ENCODE measurements at regions of chr6 and their contacts with region 1.

Region 1: GRCh38 chr6:40341726-40342125 is 245.4 kb downstream of the LRFN2 start:
- DNase-seq: peak in 1 of 9 experiments; percentile 31
- ATAC-seq: no peak
- H3K4me3 ChIP-seq: no peak overlapping the region
- H3K4me3 Mint-ChIP-seq: no peak overlapping the region
- H3K27ac ChIP-seq: no peak overlapping the region
- H3K27ac Mint-ChIP-seq: no peak overlapping the region
- H3K4me1 ChIP-seq: no peaks in the 10 kb centered on the region
- H3K4me1 Mint-ChIP-seq: no peaks in the 10 kb centered on the region
- H3K27me3 ChIP-seq: no peaks in the 10 kb centered on the region
- H3K27me3 Mint-ChIP-seq: peaks cover 7% of the 10 kb centered on the region
- CTCF ChIP-seq: no peak

Region 2: GRCh38 chr6:40285996-40286395 is 55.7 kb before region 1 on chr6:
- CTCF ChIA-PET with region 1: no interaction called
- POLR2A ChIA-PET with region 1: no interaction called
- intact Hi-C with region 1: no loop called
- DNase-seq: no peak
- ATAC-seq: no peak
- H3K4me3 ChIP-seq: no peak overlapping the region
- H3K4me3 Mint-ChIP-seq: no peak overlapping the region
- H3K27ac ChIP-seq: no peak overlapping the region
- H3K27ac Mint-ChIP-seq: no peak overlapping the region
- H3K4me1 ChIP-seq: no peaks in the 10 kb centered on the region
- H3K4me1 Mint-ChIP-seq: no peaks in the 10 kb centered on the region
- H3K27me3 ChIP-seq: no peaks in the 10 kb centered on the region
- H3K27me3 Mint-ChIP-seq: peaks cover 29% of the 10 kb centered on the region
- CTCF ChIP-seq: no peak

Region 3: GRCh38 chr6:40299681-40300080 is 42.0 kb before region 1 on chr6:
- CTCF ChIA-PET with region 1: no interaction called
- POLR2A ChIA-PET with region 1: no interaction called
- intact Hi-C with region 1: no loop called
- DNase-seq: no peak
- ATAC-seq: no peak
- H3K4me3 ChIP-seq: no peak overlapping the region
- H3K4me3 Mint-ChIP-seq: no peak overlapping the region
- H3K27ac ChIP-seq: no peak overlapping the region
- H3K27ac Mint-ChIP-seq: no peak overlapping the region
- H3K4me1 ChIP-seq: no peaks in the 10 kb centered on the region
- H3K4me1 Mint-ChIP-seq: no peaks in the 10 kb centered on the region
- H3K27me3 ChIP-seq: no peaks in the 10 kb centered on the region
- H3K27me3 Mint-ChIP-seq: peaks cover 18% of the 10 kb centered on the region
- CTCF ChIP-seq: no peak

Region 4: GRCh38 chr6:40356242-40356910 is 14.7 kb after region 1 on chr6:
- CTCF ChIA-PET with region 1: no interaction called
- POLR2A ChIA-PET with region 1: no interaction called
- intact Hi-C with region 1: no loop called
- DNase-seq: no peak
- ATAC-seq: no peak
- H3K4me3 ChIP-seq: no peak overlapping the region
- H3K4me3 Mint-ChIP-seq: no peak overlapping the region
- H3K27ac ChIP-seq: no peak overlapping the region
- H3K27ac Mint-ChIP-seq: no peak overlapping the region
- H3K4me1 ChIP-seq: no peaks in the 10 kb centered on the region
- H3K4me1 Mint-ChIP-seq: no peaks in the 10 kb centered on the region
- H3K27me3 ChIP-seq: peaks cover 0 to under 1% of the 10 kb centered on the region in 2 experiments
- H3K27me3 Mint-ChIP-seq: peaks cover 15% of the 10 kb centered on the region
- CTCF ChIP-seq: no peak

Region 5: GRCh38 chr6:40371621-40372020 is 29.9 kb after region 1 on chr6:
- CTCF ChIA-PET with region 1: no interaction called
- POLR2A ChIA-PET with region 1: no interaction called
- intact Hi-C with region 1: no loop called
- DNase-seq: no peak
- ATAC-seq: no peak
- H3K4me3 ChIP-seq: no peak overlapping the region
- H3K4me3 Mint-ChIP-seq: no peak overlapping the region
- H3K27ac ChIP-seq: no peak overlapping the region
- H3K27ac Mint-ChIP-seq: no peak overlapping the region
- H3K4me1 ChIP-seq: peaks cover 9% of the 10 kb centered on the region
- H3K4me1 Mint-ChIP-seq: peaks cover 15% of the 10 kb centered on the region
- H3K27me3 ChIP-seq: no peaks in the 10 kb centered on the region
- H3K27me3 Mint-ChIP-seq: peaks cover 2% of the 10 kb centered on the region
- CTCF ChIP-seq: no peak

Region 6: GRCh38 chr6:40419372-40419771 is 77.6 kb after region 1 on chr6:
- CTCF ChIA-PET with region 1: no interaction called
- POLR2A ChIA-PET with region 1: no interaction called
- intact Hi-C with region 1: loop called in 1 of 2 experiments (anchors 2 kb)
- DNase-seq: no peak
- ATAC-seq: no peak
- H3K4me3 ChIP-seq: no peak overlapping the region
- H3K4me3 Mint-ChIP-seq: no peak overlapping the region
- H3K27ac ChIP-seq: no peak overlapping the region
- H3K27ac Mint-ChIP-seq: no peak overlapping the region
- H3K4me1 ChIP-seq: no peaks in the 10 kb centered on the region
- H3K4me1 Mint-ChIP-seq: peaks cover 9% of the 10 kb centered on the region
- H3K27me3 ChIP-seq: no peaks in the 10 kb centered on the region
- H3K27me3 Mint-ChIP-seq: no peaks in the 10 kb centered on the region
- CTCF ChIP-seq: no peak